Sigmoid colon (tissue), 7 donors: ENCODE measurements at regions of chr9 and their contacts with region 1.

Region 1: DNA sequence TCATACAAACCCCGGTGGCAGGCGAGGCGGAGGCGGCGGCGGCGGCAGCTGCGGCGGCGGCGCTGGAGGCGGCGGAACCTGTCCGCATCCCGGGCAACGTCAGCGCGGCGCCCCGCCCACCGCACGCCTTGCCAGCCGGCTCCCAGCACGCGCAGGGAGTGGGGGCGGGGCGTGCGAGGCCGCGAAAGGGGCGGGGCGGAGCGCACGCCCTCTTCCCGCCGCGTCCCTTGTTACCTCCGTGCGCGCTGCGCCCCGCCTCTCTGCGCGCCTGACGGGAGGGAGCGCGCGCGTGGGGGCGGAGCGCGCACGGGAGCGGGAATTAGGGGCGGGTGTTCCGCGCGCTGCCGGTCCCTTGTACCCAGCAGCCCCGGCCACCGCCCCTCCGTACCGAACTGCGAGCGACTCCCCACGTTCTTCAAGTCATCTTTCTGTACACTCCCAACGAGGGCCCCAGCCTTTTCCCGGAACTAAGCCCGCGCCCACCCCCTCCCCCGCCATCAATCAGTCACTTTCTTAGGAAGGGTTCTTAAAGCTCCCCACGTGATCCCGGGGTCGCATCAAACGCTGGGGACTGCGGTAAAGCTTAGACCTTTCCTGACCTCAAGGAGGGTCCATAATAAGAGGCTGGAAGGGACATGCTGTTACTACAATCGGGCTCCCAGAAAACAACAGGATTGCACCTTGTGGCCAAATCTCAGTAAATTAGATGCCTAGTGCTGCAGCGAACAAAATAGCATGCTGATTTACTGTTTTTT is at the start of gene AGTPBP1:
- DNase-seq: peak; percentile 97
- H3K4me3 ChIP-seq: peak within 1 kb of the TSS; percentile 88 to 92 (median 90)
- H3K27ac ChIP-seq: peak within 1 kb of the TSS; percentile 80 to 92 (median 84)
- H3K4me1 ChIP-seq: peaks cover 0 to 19% (median 10%) of the 10 kb centered on the region in 4 donors
- H3K27me3 ChIP-seq: no peaks in the 10 kb centered on the region
- CTCF ChIP-seq: peak in 1 of 4 experiments; percentile 20
- EP300 ChIP-seq: no peak
- POLR2A ChIP-seq: no peak
- total RNA-seq, gene AGTPBP1: 17.1 to 24.7 (median 19.3) TPM

Region 2: GRCh38 chr9:85610074-85610860 is 131.8 kb before region 1 on chr9:
- intact Hi-C with region 1: no loop called
- DNase-seq: no peak
- H3K4me3 ChIP-seq: peak overlapping the region in 3 of 4 donors; percentile 17 to 35 (median 24)
- H3K27ac ChIP-seq: no peak overlapping the region
- H3K4me1 ChIP-seq: no peaks in the 10 kb centered on the region
- H3K27me3 ChIP-seq: no peaks in the 10 kb centered on the region
- CTCF ChIP-seq: peak; percentile 43 to 80 (median 68)
- EP300 ChIP-seq: no peak
- POLR2A ChIP-seq: no peak

Region 3: GRCh38 chr9:85940832-85941621 is 199.0 kb after region 1 on chr9 and contains the start of gene NAA35:
- intact Hi-C with region 1: loop called (anchors 2 kb)
- DNase-seq: peak; percentile 99
- H3K4me3 ChIP-seq: peak within 1 kb of the TSS; percentile 67 to 98 (median 78)
- H3K27ac ChIP-seq: peak within 1 kb of the TSS; percentile 87 to 96 (median 93)
- H3K4me1 ChIP-seq: peaks cover 0 to 42% (median 39%) of the 10 kb centered on the region in 4 donors
- H3K27me3 ChIP-seq: no peaks in the 10 kb centered on the region
- CTCF ChIP-seq: no peak
- EP300 ChIP-seq: no peak
- POLR2A ChIP-seq: peak; percentile 35 to 56
- total RNA-seq, gene NAA35: 19.5 to 31.6 (median 26.7) TPM